Activated naive CD4-positive, alpha-beta T cell treated with anti-CD3 and anti-CD28 coated beads for 36 hours (primary cell): ENCODE measurements at regions of chr9 and their contacts with region 1.

Region 1: DNA sequence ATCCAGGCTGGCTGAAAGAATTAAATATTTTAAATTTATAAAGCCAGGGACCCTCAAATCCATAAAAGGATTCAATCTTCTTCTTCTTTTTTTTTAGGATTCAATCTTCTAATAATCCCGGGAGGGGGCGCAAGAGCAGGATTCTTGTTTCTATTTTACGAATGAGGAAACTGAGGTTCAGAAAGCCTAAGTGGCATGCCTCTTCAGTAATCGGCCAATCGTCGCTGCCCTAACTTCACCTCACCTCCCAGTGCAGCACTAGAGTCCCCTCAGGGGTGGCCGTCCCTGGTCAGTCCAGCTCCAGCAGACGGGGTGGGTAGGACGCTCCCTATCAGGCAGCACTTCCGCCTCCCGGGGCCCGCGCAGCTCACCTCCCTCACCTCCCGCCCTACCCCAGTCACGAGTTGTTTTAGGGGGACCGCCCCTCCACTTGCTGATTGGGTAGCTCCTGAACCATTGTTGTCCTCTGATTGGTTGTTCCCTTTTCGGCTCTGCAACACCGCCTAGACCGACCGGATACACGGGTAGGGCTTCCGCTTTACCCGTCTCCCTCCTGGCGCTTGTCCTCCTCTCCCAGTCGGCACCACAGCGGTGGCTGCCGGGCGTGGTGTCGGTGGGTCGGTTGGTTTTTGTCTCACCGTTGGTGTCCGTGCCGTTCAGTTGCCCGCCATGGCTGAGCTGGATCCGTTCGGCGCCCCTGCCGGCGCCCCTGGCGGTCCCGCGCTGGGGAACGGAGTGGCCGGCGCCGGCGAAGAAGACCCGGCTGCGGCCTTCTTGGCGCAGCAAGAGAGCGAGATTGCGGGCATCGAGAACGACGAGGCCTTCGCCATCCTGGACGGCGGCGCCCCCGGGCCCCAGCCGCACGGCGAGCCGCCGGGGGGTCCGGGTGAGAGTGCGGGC is at the start of gene CLTA:
- DNase-seq: peak; percentile 98
- H3K4me3 Mint-ChIP-seq: peak within 1 kb of the TSS; percentile 84
- H3K27ac Mint-ChIP-seq: peak within 1 kb of the TSS; percentile 84
- H3K4me1 Mint-ChIP-seq: peaks cover 42% of the 10 kb centered on the region
- H3K27me3 Mint-ChIP-seq: no peaks in the 10 kb centered on the region
- total RNA-seq, gene CLTA: 96.4 to 101 TPM

Region 2: GRCh38 chr9:36008774-36009300 is 181.8 kb before region 1 on chr9:
- CTCF ChIA-PET with region 1: interaction called, 10 read pairs
- intact Hi-C with region 1: no loop called
- DNase-seq: peak; percentile 74
- H3K4me3 Mint-ChIP-seq: no peak overlapping the region
- H3K27ac Mint-ChIP-seq: no peak overlapping the region
- H3K4me1 Mint-ChIP-seq: peaks cover 22% of the 10 kb centered on the region
- H3K27me3 Mint-ChIP-seq: peaks cover 5% of the 10 kb centered on the region

Region 3: GRCh38 chr9:36136272-36136893 is 54.3 kb before region 1 on chr9 and contains the start of gene GLIPR2:
- CTCF ChIA-PET with region 1: interaction called, 9 read pairs
- intact Hi-C with region 1: loop called (anchors 2 kb)
- DNase-seq: peak; percentile 80
- H3K4me3 Mint-ChIP-seq: peak within 1 kb of the TSS; percentile 86
- H3K27ac Mint-ChIP-seq: no peak within 1 kb of the TSS
- H3K4me1 Mint-ChIP-seq: peaks cover 44% of the 10 kb centered on the region
- H3K27me3 Mint-ChIP-seq: no peaks in the 10 kb centered on the region
- total RNA-seq, gene GLIPR2: 8.0 to 9.7 TPM

Region 4: DNA sequence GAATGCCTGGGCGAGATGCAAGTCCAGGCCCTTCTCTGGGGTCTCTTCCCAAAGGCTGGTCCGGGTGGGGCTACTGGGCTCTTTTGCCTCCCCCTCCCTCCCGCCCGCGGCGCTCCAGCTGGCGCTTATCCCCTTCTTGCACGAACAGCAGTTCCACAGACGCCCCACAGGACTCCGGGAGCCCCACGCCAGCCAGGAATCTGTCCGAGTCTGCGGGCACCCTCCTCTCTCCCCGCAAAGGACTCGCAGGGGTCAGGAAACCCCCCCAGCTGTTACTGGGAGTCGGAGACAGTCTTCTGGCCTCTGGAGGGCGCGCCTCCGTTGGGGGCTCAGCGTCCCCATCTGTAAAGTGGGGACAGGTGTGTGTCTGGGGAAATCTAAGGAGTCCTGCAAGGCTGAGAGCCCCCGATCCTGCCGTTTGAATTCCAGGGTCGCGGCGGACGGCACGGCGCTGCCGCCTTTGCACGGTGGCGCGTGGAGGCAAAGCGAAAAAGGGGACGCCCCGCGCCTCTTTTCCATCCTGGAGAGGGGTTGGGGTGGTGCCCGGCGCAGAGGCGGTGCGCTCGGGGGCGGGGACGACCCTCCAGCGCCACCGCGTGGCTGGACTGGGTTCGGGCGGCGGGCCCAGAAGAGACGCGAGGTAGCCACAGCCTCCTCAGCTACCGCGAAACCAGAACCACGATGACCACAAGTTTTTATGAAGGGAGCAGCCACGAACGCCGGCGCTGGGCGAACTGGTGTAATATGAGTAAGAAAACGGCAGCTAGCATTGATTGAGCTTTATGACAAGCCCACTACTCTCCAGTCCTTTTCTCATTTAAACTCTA is 24.3 kb before region 1 on chr9:
- CTCF ChIA-PET with region 1: interaction called, 14 read pairs
- intact Hi-C with region 1: no loop called
- DNase-seq: peak; percentile 81
- H3K4me3 Mint-ChIP-seq: peak overlapping the region; percentile 70
- H3K27ac Mint-ChIP-seq: no peak overlapping the region
- H3K4me1 Mint-ChIP-seq: peaks cover 3% of the 10 kb centered on the region
- H3K27me3 Mint-ChIP-seq: no peaks in the 10 kb centered on the region

Region 5: DNA sequence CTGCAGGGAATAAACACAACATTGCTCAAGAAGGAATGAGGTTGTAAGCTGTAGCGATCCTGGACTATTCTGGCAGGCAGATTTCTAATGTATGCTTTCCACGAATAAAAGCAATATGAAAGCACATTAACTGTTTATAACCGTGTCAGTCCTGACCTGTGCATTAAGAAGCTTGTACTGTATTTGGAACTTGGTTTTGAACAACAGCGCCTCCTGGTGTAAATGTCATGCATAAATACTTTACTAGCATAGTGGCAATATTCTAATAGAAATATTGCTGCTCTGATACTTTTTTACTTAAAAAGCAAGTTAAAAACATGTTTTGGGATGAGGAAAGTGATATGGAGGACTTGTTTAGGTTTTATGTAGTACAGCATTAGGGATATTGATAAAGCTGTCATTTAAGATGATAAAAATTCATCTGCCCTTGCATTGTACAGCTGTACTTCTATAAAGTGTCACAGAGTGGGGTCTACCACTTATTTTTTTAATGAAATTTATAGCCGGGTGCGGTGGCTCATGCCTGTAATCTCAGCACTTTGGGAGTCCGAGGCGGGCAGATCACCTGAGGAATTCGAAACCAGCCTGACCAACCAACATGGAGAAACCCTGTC is 138.3 kb after region 1 on chr9:
- CTCF ChIA-PET with region 1: interaction called, 34 read pairs
- intact Hi-C with region 1: loop called (anchors 1 kb)
- DNase-seq: peak; percentile 70
- H3K4me3 Mint-ChIP-seq: no peak overlapping the region
- H3K27ac Mint-ChIP-seq: no peak overlapping the region
- H3K4me1 Mint-ChIP-seq: peaks cover 2% of the 10 kb centered on the region
- H3K27me3 Mint-ChIP-seq: no peaks in the 10 kb centered on the region

Region 6: GRCh38 chr9:36487482-36488388 is 297.1 kb after region 1 on chr9:
- CTCF ChIA-PET with region 1: no interaction called
- intact Hi-C with region 1: loop called (anchors 2 kb)
- DNase-seq: peak; percentile 87
- H3K4me3 Mint-ChIP-seq: peak overlapping the region; percentile 90
- H3K27ac Mint-ChIP-seq: peak overlapping the region; percentile 98
- H3K4me1 Mint-ChIP-seq: peaks cover 61% of the 10 kb centered on the region
- H3K27me3 Mint-ChIP-seq: no peaks in the 10 kb centered on the region